CD4-positive, alpha-beta T cell (primary cell): ENCODE measurements at regions of chr18 and their contacts with region 1.

Region 1: GRCh38 chr18:26057344-26057773 is 33.1 kb downstream of the SS18 start:
- DNase-seq: no peak
- ATAC-seq: no peak
- H3K4me3 ChIP-seq: no peak overlapping the region
- H3K4me3 Mint-ChIP-seq: no peak overlapping the region
- H3K27ac ChIP-seq: no peak overlapping the region
- H3K27ac Mint-ChIP-seq: no peak overlapping the region
- H3K4me1 ChIP-seq: no peaks in the 10 kb centered on the region
- H3K4me1 Mint-ChIP-seq: peaks cover 35% of the 10 kb centered on the region
- H3K27me3 ChIP-seq: no peaks in the 10 kb centered on the region
- H3K27me3 Mint-ChIP-seq: no peaks in the 10 kb centered on the region
- CTCF ChIP-seq: no peak

Region 2: GRCh38 chr18:24475926-24476589 is 1581.3 kb before region 1 on chr18:
- CTCF ChIA-PET with region 1: no interaction called
- POLR2A ChIA-PET with region 1: no interaction called
- intact Hi-C with region 1: no loop called
- DNase-seq: peak in 1 of 14 experiments; percentile 13
- ATAC-seq: peak; percentile 44
- H3K4me3 ChIP-seq: no peak overlapping the region
- H3K4me3 Mint-ChIP-seq: no peak overlapping the region
- H3K27ac ChIP-seq: no peak overlapping the region
- H3K27ac Mint-ChIP-seq: no peak overlapping the region
- H3K4me1 ChIP-seq: no peaks in the 10 kb centered on the region
- H3K4me1 Mint-ChIP-seq: peaks cover 17% of the 10 kb centered on the region
- H3K27me3 ChIP-seq: no peaks in the 10 kb centered on the region
- H3K27me3 Mint-ChIP-seq: no peaks in the 10 kb centered on the region
- CTCF ChIP-seq: no peak

Region 3: GRCh38 chr18:26159353-26159752 is 102.0 kb after region 1 on chr18:
- CTCF ChIA-PET with region 1: no interaction called
- POLR2A ChIA-PET with region 1: no interaction called
- intact Hi-C with region 1: loop called in 1 of 2 experiments (anchors 5 kb)
- DNase-seq: peak in 3 of 14 experiments; percentile 18 to 29 (median 28)
- ATAC-seq: peak; percentile 51
- H3K4me3 ChIP-seq: no peak overlapping the region
- H3K4me3 Mint-ChIP-seq: no peak overlapping the region
- H3K27ac ChIP-seq: no peak overlapping the region
- H3K27ac Mint-ChIP-seq: no peak overlapping the region
- H3K4me1 ChIP-seq: no peaks in the 10 kb centered on the region
- H3K4me1 Mint-ChIP-seq: no peaks in the 10 kb centered on the region
- H3K27me3 ChIP-seq: no peaks in the 10 kb centered on the region
- H3K27me3 Mint-ChIP-seq: no peaks in the 10 kb centered on the region
- CTCF ChIP-seq: peak; percentile 45